A549 (cell line): ENCODE measurements at regions of chr3 and their contacts with region 1.

Region 1: GRCh38 chr3:122383771-122384697 is at the start of gene FAM162A:
- DNase-seq: peak; percentile 80 to 95
- ATAC-seq: peak; percentile 92 to 98
- H3K4me3 ChIP-seq: peak within 1 kb of the TSS; percentile 84
- H3K27ac ChIP-seq: peak within 1 kb of the TSS; percentile 83 to 92
- H3K4me1 ChIP-seq: peaks cover 15% of the 10 kb centered on the region; the same call in 2 of the 3 replicates
- CTCF ChIP-seq: peak; percentile 72
- EP300 ChIP-seq: no peak
- POLR2A ChIP-seq: peak; percentile 90
- RAD21 ChIP-seq: peak; percentile 26 to 58; a peak in 3 of 5 replicates
- polyA plus RNA-seq, gene FAM162A: 61.1 and 64.8 TPM in 2 replicates

Region 2: GRCh38 chr3:122305818-122306621 is 78.0 kb before region 1 on chr3:
- CTCF ChIA-PET with region 1: interaction called, 10 read pairs
- POLR2A ChIA-PET with region 1: interaction called, 16 read pairs
- DNase-seq: peak in 1 of 2 experiments; percentile 53
- ATAC-seq: peak; percentile 96 to 97
- H3K4me3 ChIP-seq: no peak overlapping the region
- H3K27ac ChIP-seq: no peak overlapping the region
- H3K4me1 ChIP-seq: no peaks in the 10 kb centered on the region
- CTCF ChIP-seq: peak; percentile 45
- EP300 ChIP-seq: no peak
- POLR2A ChIP-seq: no peak
- RAD21 ChIP-seq: peak; percentile 46 to 60; a peak in 4 of 5 replicates

Region 3: GRCh38 chr3:122409446-122409845 is 25.4 kb after region 1 on chr3:
- CTCF ChIA-PET with region 1: interaction called, 22 read pairs
- POLR2A ChIA-PET with region 1: interaction called, 5 read pairs
- DNase-seq: no peak
- ATAC-seq: no peak
- H3K4me3 ChIP-seq: no peak overlapping the region
- H3K27ac ChIP-seq: no peak overlapping the region
- H3K4me1 ChIP-seq: peaks cover 6% of the 10 kb centered on the region; the same call in 1 of the 3 replicates
- CTCF ChIP-seq: no peak
- EP300 ChIP-seq: no peak
- POLR2A ChIP-seq: no peak
- RAD21 ChIP-seq: no peak

Region 4: GRCh38 chr3:122415720-122416654 is 32.0 kb after region 1 on chr3 and contains the start of gene WDR5B:
- CTCF ChIA-PET with region 1: interaction called, 4 read pairs
- POLR2A ChIA-PET with region 1: interaction called, 26 read pairs
- DNase-seq: peak; percentile 98
- ATAC-seq: peak; percentile 95 to 98
- H3K4me3 ChIP-seq: peak within 1 kb of the TSS; percentile 74
- H3K27ac ChIP-seq: peak within 1 kb of the TSS; percentile 87 to 90
- H3K4me1 ChIP-seq: peaks cover 16% of the 10 kb centered on the region
- CTCF ChIP-seq: no peak
- EP300 ChIP-seq: no peak
- POLR2A ChIP-seq: peak; percentile 62
- RAD21 ChIP-seq: 0 out of 5 replicates have a peak, but pooled peaks of 1 of the 2 experiments have one; percentile 1
- polyA plus RNA-seq, gene WDR5B: 9.0 and 10.2 TPM in 2 replicates

Region 5: GRCh38 chr3:122578069-122578740 is 194.2 kb after region 1 on chr3:
- CTCF ChIA-PET with region 1: no interaction called
- POLR2A ChIA-PET with region 1: no interaction called
- DNase-seq: no peak
- ATAC-seq: no peak
- H3K4me3 ChIP-seq: no peak overlapping the region
- H3K27ac ChIP-seq: no peak overlapping the region
- H3K4me1 ChIP-seq: peaks cover 5% of the 10 kb centered on the region
- CTCF ChIP-seq: no peak
- EP300 ChIP-seq: no peak
- POLR2A ChIP-seq: no peak
- RAD21 ChIP-seq: no peak